ENCODE measurements at regions of chr1 and their contacts with region 1.

Region 1: DNA sequence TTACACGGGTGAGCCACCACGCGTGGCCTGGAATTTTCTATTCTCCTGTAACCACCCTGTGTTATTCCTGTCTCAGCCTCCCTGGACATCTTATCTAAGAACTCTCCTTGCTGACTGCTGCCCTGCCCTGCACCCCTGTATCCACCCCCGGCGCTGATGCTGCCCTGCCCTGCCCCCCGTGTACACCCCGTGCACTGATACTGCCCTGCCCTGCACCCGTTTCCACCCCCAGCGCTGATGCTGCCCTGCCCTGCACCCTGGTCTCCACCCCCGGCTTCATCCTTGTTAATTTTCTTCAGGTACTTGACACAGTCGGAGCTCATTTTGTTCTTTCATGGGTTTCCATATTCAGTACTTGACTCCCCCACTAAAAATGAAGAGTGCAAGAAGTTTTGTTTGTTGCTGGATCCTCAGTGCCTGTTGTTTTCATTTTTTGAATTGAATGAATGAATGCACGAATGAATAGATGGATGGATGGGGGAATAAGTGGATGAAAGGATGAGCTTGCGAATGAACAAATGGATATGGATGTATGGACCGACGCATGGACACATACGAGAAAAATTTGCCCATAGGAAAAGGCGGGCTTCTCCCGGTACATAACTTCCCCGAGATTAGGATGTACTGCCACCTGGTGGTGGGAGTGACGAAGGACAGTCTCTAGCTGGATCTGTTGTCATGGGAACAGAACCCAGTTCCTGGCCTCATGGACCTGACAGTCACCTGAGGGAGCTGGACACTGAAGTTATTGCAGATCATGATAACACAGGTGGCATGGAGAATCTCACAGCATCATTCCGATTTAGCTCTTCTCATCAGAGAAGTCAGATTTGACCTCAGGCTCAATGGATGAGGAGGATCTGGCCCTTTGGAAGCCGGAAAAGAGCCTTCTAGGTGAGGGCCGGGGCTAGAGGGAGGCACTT is 14.9 kb downstream of the AADACL4 start:
- DNase-seq: peak; percentile 95
- H3K27ac ChIP-seq: no peak overlapping the region
- CTCF ChIP-seq: peak; percentile 90

Region 2: DNA sequence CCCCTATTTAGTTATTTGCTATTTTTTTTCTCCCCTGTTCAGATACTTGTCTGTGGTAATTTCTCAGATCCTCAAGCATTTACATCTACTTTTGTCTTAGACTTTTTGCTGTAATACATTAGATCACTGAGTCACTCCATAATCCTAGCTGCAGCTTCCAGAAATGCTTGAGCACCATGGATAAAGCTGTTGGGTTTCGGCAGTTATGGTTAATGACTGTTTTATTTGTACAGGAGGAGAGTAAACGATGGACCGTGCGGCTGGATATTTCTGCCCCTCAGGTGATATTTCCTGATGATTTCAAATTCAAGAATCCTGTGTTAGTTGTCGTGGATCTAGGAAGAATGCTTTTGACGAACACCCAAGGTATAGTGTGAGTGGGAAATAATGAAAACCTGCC is 386.0 kb before region 1 on chr1:
- CTCF ChIA-PET with region 1: interaction called, 10 read pairs
- POLR2A ChIA-PET with region 1: no interaction called
- DNase-seq: no peak
- H3K27ac ChIP-seq: no peak overlapping the region
- CTCF ChIP-seq: no peak

Region 3: GRCh38 chr1:12678350-12678749 is 19.6 kb after region 1 on chr1:
- CTCF ChIA-PET with region 1: interaction called, 10 read pairs
- POLR2A ChIA-PET with region 1: no interaction called
- DNase-seq: no peak
- H3K27ac ChIP-seq: no peak overlapping the region
- CTCF ChIP-seq: no peak

Measured in RWPE1 (cell line).